ENCODE measurements at regions of chr5 and their contacts with region 1.

Region 1: GRCh38 chr5:143066556-143067281 is 296.5 kb downstream of the ARHGAP26 start:
- H3K4me3 Mint-ChIP-seq: peak overlapping the region; percentile 5
- H3K27ac Mint-ChIP-seq: peak overlapping the region; percentile 92
- H3K4me1 Mint-ChIP-seq: peaks cover 66% of the 10 kb centered on the region
- H3K27me3 Mint-ChIP-seq: no peaks in the 10 kb centered on the region

Region 2: DNA sequence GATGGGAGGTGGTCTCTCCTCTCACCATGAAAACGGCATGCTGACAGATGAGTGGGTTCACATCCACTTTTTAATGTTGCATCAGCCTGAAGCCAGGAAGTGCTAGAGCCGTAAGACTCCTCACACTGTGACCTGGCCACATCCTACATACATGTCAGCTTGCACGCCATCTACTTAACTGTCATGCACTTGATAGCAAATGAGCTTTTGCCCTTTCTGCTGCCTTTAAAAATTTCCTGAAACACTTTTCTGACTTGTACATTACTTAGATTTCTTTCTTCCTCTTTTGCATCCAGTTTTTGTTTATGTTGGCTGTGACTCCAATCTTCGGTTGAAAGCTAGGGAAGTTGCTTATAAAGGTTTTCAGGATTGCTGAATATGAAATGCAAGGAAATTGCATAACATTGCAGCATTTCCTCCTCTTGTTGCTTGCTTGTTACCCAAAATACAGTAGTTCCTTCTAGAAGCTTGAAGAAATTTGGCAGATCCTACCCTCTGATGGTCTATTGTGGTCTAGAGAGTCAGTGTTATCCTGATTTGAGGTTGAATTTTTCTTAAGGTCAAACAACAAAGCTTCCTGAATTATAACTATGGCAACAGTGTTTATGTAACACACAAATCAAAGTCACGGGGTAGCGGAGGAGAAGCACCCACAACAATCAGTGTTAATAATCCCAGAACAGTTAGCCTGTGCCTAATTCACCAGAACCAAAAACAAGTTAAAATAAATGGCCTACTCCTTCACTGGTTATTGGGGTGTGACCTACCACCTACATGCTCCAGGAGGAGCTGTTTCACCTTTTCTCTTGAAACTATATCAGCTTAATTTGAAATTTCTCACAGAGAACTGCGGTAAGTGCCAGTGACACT is 64.0 kb before region 1 on chr5:
- intact Hi-C with region 1: loop called (anchors 2 kb)
- H3K4me3 Mint-ChIP-seq: peak overlapping the region; percentile 13
- H3K27ac Mint-ChIP-seq: peak overlapping the region; percentile 90
- H3K4me1 Mint-ChIP-seq: peaks cover 81% of the 10 kb centered on the region
- H3K27me3 Mint-ChIP-seq: no peaks in the 10 kb centered on the region

Region 3: DNA sequence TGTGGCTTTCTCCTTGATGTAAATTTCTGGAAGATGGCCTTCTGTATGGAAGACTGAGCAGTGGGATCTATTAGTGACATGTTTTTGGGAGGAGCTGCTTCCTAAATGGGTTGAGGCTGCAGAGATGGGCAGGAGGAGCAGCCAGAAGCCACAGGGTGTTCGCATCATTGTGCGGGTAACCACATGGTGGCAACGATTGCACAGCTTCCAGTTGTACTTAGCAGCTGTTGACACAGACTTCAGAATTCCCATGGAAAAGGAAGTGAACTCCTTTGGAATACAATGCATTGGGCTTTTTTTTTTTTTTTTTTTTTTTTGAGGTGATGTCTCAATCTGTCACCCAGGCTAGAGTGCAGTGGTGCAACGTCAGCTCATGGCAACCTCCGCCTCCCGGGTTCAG is 39.5 kb after region 1 on chr5:
- intact Hi-C with region 1: no loop called
- H3K4me3 Mint-ChIP-seq: no peak overlapping the region
- H3K27ac Mint-ChIP-seq: no peak overlapping the region
- H3K4me1 Mint-ChIP-seq: peaks cover 66% of the 10 kb centered on the region
- H3K27me3 Mint-ChIP-seq: no peaks in the 10 kb centered on the region

Region 4: GRCh38 chr5:143119291-143119769 is 52.6 kb after region 1 on chr5:
- intact Hi-C with region 1: loop called (anchors 5 kb)
- H3K4me3 Mint-ChIP-seq: no peak overlapping the region
- H3K27ac Mint-ChIP-seq: peak overlapping the region; percentile 90
- H3K4me1 Mint-ChIP-seq: peaks cover 47% of the 10 kb centered on the region
- H3K27me3 Mint-ChIP-seq: no peaks in the 10 kb centered on the region

Region 5: GRCh38 chr5:143244000-143244736 is 177.4 kb after region 1 on chr5:
- intact Hi-C with region 1: no loop called
- H3K4me3 Mint-ChIP-seq: no peak overlapping the region
- H3K27ac Mint-ChIP-seq: no peak overlapping the region
- H3K4me1 Mint-ChIP-seq: peaks cover 7% of the 10 kb centered on the region
- H3K27me3 Mint-ChIP-seq: no peaks in the 10 kb centered on the region